PC-3 (cell line): ENCODE measurements at regions of chr5 and their contacts with region 1.

Region 1: GRCh38 chr5:149141224-149141956 is at the start of gene ABLIM3:
- DNase-seq: peak; percentile 96
- ATAC-seq: peak; percentile 70
- H3K4me3 ChIP-seq: peak within 1 kb of the TSS; percentile 79
- H3K27ac ChIP-seq: peak within 1 kb of the TSS; percentile 75
- H3K4me1 ChIP-seq: peaks cover 49% of the 10 kb centered on the region
- H3K27me3 ChIP-seq: no peaks in the 10 kb centered on the region
- CTCF ChIP-seq: peak; percentile 100
- total RNA-seq, gene ABLIM3: 43.6 and 48.0 TPM in 2 replicates

Region 2: DNA sequence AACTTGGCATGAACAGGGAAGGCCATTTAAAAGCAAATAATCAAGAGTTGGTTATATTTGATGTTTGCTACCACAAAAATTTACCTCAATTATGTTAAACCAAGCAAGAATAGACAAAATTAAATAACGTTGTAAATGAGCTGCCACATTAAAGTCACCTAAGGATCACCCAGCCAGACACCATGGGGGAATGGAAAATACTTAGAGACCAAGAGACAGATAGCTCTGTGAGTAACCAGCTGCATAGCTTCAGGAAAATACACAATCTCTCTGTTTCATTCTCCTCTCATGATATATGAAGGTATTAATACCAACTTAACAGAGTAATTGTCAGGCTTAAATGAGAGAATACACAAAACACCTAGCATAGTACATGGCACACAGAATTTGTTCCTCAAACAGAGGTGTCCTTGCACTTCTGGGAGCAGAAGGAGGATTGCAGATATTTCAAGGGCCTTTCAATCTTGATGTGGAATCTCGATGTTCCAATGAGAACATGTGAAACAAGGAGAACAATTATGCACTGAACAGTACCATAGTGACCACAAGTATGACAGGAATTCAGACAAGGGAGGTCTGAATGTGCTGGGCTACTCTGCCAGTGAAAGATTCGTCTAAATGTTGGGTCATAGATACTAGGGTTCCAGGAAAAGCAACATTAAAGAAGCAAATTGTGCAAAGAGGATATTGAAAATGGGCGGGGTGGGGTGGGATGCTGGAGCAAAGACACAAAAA is 1377.4 kb before region 1 on chr5:
- CTCF ChIA-PET with region 1: no interaction called
- POLR2A ChIA-PET with region 1: no interaction called
- intact Hi-C with region 1: no loop called
- DNase-seq: peak; percentile 40
- ATAC-seq: peak; percentile 46
- H3K4me3 ChIP-seq: no peak overlapping the region
- H3K27ac ChIP-seq: no peak overlapping the region
- H3K4me1 ChIP-seq: no peaks in the 10 kb centered on the region
- H3K27me3 ChIP-seq: no peaks in the 10 kb centered on the region
- CTCF ChIP-seq: no peak

Region 3: DNA sequence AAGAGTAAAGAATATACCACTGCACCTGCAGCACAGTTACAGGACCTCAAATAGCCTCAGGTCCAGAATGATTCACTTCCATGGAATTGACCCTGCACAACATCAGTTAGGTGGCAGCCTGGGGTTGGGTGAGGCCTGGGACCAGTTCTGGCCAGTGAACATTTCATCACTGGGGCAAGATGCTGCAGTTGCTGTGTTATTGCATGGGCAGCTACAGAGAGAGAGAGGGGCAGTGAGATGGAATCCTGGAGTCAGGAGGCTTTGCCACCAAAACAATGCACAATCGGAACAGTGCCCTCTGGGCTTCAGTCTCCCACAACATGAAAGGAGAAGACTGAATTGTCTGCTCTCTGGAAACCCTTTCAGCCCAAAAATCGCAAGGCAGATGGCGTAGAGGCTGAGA is 130.3 kb before region 1 on chr5:
- CTCF ChIA-PET with region 1: no interaction called
- POLR2A ChIA-PET with region 1: interaction called, 12 read pairs
- intact Hi-C with region 1: no loop called
- DNase-seq: peak; percentile 100
- ATAC-seq: peak; percentile 88
- H3K4me3 ChIP-seq: no peak overlapping the region
- H3K27ac ChIP-seq: peak overlapping the region; percentile 52
- H3K4me1 ChIP-seq: peaks cover 54% of the 10 kb centered on the region
- H3K27me3 ChIP-seq: no peaks in the 10 kb centered on the region
- CTCF ChIP-seq: peak; percentile 28

Region 4: DNA sequence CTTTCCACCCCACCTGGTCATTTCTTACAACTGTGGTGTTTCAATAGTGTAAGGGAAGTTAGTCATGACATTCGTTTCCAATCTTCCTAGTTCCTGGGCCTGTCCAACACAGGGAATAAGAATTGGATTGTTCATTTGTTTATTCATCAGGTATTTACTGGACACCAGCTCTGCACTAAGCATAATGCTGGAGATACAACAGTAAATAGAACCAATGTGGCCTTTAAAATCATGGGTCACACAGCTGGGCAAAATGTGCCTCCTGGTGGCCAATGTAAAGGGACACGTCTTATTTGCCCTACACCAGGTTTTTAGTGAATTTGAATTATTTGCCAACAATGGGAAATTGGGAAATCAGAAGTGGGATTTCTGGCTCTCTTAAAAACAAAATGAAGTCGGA is 10.3 kb after region 1 on chr5:
- CTCF ChIA-PET with region 1: interaction called, 15 read pairs
- POLR2A ChIA-PET with region 1: no interaction called
- intact Hi-C with region 1: no loop called
- DNase-seq: peak; percentile 77
- ATAC-seq: peak; percentile 68
- H3K4me3 ChIP-seq: no peak overlapping the region
- H3K27ac ChIP-seq: peak overlapping the region; percentile 23
- H3K4me1 ChIP-seq: peaks cover 28% of the 10 kb centered on the region
- H3K27me3 ChIP-seq: no peaks in the 10 kb centered on the region
- CTCF ChIP-seq: peak; percentile 93

Region 5: GRCh38 chr5:149162401-149163084 is 21.2 kb after region 1 on chr5:
- CTCF ChIA-PET with region 1: interaction called, 4 read pairs
- POLR2A ChIA-PET with region 1: no interaction called
- intact Hi-C with region 1: loop called (anchors 1 kb)
- DNase-seq: peak; percentile 98
- ATAC-seq: peak; percentile 92
- H3K4me3 ChIP-seq: no peak overlapping the region
- H3K27ac ChIP-seq: peak overlapping the region; percentile 72
- H3K4me1 ChIP-seq: peaks cover 35% of the 10 kb centered on the region
- H3K27me3 ChIP-seq: no peaks in the 10 kb centered on the region
- CTCF ChIP-seq: no peak

Region 6: DNA sequence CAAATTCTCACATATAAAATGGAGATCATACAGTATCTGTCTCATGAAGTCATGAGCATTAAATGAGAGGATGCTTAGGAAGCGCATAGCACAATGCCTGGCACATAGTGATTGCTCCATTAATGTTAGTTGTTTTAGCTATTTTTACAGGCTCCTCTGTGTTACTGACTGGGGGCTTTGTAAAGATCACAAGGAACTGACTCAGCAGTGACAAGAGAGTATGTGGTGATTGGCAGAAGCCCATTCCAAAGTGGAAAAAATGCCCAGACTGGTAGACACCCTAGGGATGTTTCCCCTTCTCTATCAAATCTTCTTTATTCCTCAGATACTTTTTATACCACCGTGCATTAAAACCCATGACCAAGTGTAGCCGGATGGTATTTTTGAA is 33.5 kb after region 1 on chr5:
- CTCF ChIA-PET with region 1: interaction called, 4 read pairs
- POLR2A ChIA-PET with region 1: no interaction called
- intact Hi-C with region 1: loop called (anchors 1 kb)
- DNase-seq: peak; percentile 68
- ATAC-seq: peak; percentile 28
- H3K4me3 ChIP-seq: peak overlapping the region; percentile 6; the same call in 1 of the 2 replicates
- H3K27ac ChIP-seq: peak overlapping the region; percentile 86
- H3K4me1 ChIP-seq: peaks cover 47% of the 10 kb centered on the region
- H3K27me3 ChIP-seq: no peaks in the 10 kb centered on the region
- CTCF ChIP-seq: no peak

Region 7: DNA sequence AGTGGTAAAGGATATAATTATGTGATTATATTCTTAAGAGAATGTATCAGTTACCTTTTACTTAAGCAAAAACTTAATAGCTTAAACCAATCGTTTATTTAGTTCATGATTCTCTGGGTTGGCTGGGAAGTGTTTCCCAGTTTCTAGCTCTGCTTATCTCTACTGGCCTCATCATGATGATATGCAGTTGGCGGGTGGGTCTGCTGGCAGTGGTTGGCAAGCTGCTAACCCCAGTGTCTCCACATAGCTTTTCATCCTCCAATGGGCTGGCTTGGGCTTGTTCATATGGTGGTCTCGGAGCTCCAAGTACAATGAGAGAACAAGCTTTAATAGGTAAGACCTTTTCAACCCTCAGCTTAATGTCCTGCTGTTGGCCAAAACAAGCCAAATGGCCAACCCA is 43.7 kb after region 1 on chr5:
- CTCF ChIA-PET with region 1: interaction called, 4 read pairs
- POLR2A ChIA-PET with region 1: no interaction called
- intact Hi-C with region 1: loop called (anchors 1 kb)
- DNase-seq: no peak
- ATAC-seq: no peak
- H3K4me3 ChIP-seq: no peak overlapping the region
- H3K27ac ChIP-seq: no peak overlapping the region
- H3K4me1 ChIP-seq: peaks cover 30% of the 10 kb centered on the region
- H3K27me3 ChIP-seq: no peaks in the 10 kb centered on the region
- CTCF ChIP-seq: no peak

Region 8: GRCh38 chr5:149345147-149345875 is 203.9 kb after region 1 on chr5 and contains the start of gene GRPEL2:
- CTCF ChIA-PET with region 1: no interaction called
- POLR2A ChIA-PET with region 1: no interaction called
- intact Hi-C with region 1: loop called (anchors 5 kb)
- DNase-seq: peak; percentile 100
- ATAC-seq: peak; percentile 97
- H3K4me3 ChIP-seq: peak within 1 kb of the TSS; percentile 81
- H3K27ac ChIP-seq: peak within 1 kb of the TSS; percentile 42
- H3K4me1 ChIP-seq: peaks cover 22% of the 10 kb centered on the region
- H3K27me3 ChIP-seq: no peaks in the 10 kb centered on the region
- CTCF ChIP-seq: no peak
- total RNA-seq, gene GRPEL2: 43.8 and 49.4 TPM in 2 replicates